ENCODE measurements at regions of chr1 and their contacts with region 1.

Region 1: DNA sequence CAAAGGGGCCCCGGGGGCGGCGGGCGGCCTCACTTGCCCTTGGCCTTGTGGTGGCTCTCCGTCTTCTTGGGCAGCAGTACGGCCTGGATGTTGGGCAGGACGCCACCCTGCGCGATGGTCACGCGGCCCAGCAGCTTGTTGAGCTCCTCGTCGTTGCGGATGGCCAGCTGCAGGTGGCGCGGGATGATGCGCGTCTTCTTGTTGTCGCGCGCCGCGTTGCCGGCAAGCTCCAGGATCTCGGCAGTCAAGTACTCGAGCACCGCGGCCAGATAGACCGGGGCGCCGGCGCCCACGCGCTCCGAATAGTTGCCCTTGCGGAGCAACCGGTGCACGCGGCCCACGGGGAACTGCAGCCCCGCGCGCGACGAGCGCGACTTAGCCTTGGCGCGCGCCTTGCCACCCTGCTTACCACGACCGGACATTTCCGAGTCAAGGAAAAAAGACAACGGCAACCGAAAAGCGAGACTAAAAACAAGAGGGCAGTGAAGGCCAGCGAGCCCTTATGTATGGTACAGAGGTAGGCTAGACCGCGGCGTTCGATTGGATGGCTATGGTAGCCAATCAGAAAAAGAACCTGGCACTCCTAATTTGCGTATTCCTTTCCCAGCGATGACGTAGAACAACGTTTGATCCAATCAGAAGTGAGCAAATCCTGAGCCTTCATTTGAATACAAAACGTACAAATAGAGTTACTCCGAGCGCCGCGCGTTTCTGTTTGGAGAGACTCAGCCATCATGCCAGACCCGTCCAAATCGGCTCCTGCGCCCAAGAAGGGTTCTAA is 29.6 kb upstream of the RNF187 start:
- DNase-seq: peak; percentile 92
- H3K4me3 Mint-ChIP-seq: peak overlapping the region; percentile 96
- H3K27ac Mint-ChIP-seq: peak overlapping the region; percentile 99
- H3K4me1 Mint-ChIP-seq: peaks cover 55% of the 10 kb centered on the region
- H3K27me3 Mint-ChIP-seq: no peaks in the 10 kb centered on the region

Region 2: DNA sequence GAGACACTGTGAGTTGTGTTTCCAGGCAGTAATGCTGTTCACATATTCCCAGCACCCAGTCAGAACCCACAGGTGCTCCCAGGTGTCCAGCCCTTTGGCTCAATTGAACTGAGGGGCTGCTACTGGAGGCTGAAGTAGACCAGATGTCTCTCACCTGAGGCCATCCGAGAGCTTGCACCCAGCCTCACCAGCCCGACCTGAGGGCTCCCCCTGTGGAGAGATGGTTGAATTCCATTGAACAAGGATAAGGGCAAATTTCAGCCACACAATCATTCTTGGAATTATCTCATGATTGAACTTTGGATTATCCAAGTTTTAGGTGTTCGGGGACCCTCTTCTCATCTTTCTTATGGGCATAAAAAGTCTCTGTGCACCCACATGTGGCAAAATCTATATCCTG is 197.6 kb before region 1 on chr1:
- CTCF ChIA-PET with region 1: no interaction called
- POLR2A ChIA-PET with region 1: no interaction called
- DNase-seq: no peak
- H3K4me3 Mint-ChIP-seq: no peak overlapping the region
- H3K27ac Mint-ChIP-seq: no peak overlapping the region
- H3K4me1 Mint-ChIP-seq: no peaks in the 10 kb centered on the region
- H3K27me3 Mint-ChIP-seq: no peaks in the 10 kb centered on the region

Region 3: GRCh38 chr1:228378090-228378872 is 79.3 kb before region 1 on chr1:
- CTCF ChIA-PET with region 1: no interaction called
- POLR2A ChIA-PET with region 1: no interaction called
- DNase-seq: peak; percentile 70
- H3K4me3 Mint-ChIP-seq: peak overlapping the region; percentile 73
- H3K27ac Mint-ChIP-seq: no peak overlapping the region
- H3K4me1 Mint-ChIP-seq: peaks cover 9% of the 10 kb centered on the region
- H3K27me3 Mint-ChIP-seq: peaks cover 35% of the 10 kb centered on the region

Region 4: DNA sequence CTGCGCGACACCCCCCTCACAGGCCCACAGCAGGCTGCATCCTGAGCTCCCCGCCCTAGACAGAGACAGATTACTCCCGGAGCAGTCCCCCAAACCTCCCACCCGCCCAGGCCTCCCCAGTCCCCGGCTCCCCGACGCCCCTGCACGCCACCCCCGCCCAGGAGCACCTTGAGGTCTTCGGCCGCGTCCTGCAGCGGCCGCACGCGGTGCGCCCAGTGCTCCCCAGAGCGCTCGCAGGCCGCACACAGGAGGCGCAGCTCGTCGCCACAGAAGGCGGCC is 51.7 kb before region 1 on chr1:
- CTCF ChIA-PET with region 1: interaction called, 8 read pairs
- POLR2A ChIA-PET with region 1: interaction called, 90 read pairs
- DNase-seq: no peak
- H3K4me3 Mint-ChIP-seq: peak overlapping the region; percentile 85
- H3K27ac Mint-ChIP-seq: peak overlapping the region; percentile 90
- H3K4me1 Mint-ChIP-seq: peaks cover 61% of the 10 kb centered on the region
- H3K27me3 Mint-ChIP-seq: no peaks in the 10 kb centered on the region

Region 5: DNA sequence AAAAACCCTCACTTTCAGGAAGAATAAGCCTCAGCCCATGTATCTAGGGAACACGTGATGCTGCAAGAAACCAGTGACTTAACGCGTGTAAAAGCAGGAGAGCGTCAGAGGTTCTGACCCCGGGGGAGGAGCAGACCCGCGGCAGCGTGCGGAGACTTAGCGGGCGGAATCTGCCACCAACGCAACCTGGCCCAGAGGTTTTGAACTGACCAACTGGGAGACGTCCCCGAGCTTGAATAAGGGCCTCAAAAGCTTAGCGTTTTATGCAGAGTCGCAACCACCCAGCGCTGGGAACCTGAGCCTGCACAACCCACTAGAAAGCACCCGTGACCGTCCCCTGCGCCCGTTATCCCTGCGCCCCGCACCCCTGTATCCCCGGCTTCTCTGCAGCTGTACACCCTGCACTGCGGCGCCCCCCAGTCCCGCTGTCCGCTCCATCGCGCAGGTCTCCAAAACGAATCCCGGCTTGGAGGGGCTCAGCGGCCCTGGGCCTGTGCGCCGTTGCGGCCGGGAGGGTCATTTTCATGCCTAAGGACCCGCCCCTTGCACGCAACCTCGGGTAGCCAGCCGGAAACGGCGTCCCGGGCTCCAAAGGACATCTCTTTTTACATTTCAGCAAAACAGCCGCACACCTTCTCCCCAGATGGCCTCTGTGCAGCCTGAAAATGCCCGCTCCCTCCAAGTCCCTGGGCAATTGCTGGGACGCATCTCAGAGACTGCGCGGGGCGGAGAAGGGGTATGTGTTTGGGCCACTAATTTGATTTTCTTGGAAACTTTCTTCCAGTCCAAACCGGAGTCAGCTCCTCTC is 11.5 kb before region 1 on chr1:
- CTCF ChIA-PET with region 1: interaction called, 8 read pairs
- POLR2A ChIA-PET with region 1: interaction called, 17 read pairs
- DNase-seq: peak; percentile 52
- H3K4me3 Mint-ChIP-seq: peak overlapping the region; percentile 74
- H3K27ac Mint-ChIP-seq: peak overlapping the region; percentile 18
- H3K4me1 Mint-ChIP-seq: peaks cover 19% of the 10 kb centered on the region
- H3K27me3 Mint-ChIP-seq: peaks cover 57% of the 10 kb centered on the region

Region 6: DNA sequence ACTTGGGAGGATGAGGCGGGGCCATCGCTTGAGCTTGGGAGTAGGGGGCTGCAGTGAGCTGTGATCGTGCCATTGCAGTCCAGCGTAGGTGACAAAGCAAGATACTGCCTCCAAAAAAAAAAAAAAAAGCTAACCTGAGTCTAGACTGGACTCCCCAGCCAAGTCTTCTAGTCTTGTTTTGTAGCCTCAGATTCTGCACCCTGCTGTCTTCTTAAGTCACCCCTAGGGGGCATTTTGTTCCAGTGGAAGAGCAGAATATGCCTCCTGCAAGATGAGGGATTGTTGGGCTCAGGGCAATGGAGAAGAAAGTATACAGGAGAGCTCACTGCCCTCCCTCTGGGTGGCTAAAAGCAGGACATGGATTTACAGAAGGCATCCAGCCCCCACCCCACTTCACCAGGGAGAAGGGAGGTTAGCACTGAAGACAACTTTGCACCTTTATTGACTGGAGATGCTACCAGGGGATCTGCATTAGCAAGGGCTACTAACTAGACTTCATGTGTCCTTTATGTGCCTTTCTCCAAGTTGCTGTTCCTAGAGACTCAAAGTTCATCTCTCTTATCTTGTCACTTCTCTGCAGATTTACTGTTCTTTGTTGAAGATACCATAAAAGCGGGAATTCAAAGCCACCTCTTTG is 14.3 kb after region 1 on chr1:
- CTCF ChIA-PET with region 1: interaction called, 30 read pairs
- POLR2A ChIA-PET with region 1: interaction called, 63 read pairs
- DNase-seq: peak; percentile 39
- H3K4me3 Mint-ChIP-seq: no peak overlapping the region
- H3K27ac Mint-ChIP-seq: no peak overlapping the region
- H3K4me1 Mint-ChIP-seq: peaks cover 40% of the 10 kb centered on the region
- H3K27me3 Mint-ChIP-seq: peaks cover 3% of the 10 kb centered on the region

Region 7: DNA sequence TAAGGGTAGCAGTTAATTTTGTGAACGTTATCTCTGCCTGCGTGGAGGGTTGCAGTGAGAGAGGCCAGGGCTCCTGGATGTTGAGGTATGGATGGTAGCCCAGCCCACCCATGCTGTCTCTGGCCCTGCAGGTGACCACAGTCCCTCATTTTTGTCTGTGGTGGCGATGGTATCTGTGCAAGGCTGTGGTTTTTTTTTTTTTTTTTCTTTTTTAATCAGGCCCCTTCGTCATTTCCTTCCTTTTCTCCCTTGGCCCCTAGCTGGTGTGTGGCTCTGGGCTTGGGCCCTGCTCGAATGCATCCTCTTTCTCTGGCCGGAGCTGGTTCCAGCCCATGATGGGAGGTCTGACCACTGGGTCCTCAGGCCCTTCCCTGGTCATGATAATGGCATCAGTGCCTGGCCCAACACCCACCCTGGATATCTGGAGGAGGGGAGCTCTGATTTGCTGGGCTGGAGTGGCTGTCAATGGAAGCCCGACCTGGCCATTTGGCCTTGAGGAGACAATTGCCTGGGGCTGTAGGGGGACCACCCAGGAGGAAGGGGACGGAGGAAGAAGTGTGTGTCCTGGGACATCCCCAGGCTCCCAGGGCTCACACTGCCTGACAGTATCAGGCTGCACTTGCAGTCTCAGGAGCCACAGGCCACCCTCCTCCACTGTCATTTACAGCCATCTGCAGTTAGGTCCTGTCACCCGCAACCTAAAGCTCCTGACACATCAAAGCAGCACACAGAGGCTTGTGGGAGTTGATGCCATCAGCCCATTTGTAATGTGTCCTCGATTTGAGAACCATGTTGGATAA is 21.5 kb after region 1 on chr1:
- CTCF ChIA-PET with region 1: interaction called, 21 read pairs
- POLR2A ChIA-PET with region 1: interaction called, 63 read pairs
- DNase-seq: peak; percentile 59
- H3K4me3 Mint-ChIP-seq: peak overlapping the region; percentile 48
- H3K27ac Mint-ChIP-seq: peak overlapping the region; percentile 91
- H3K4me1 Mint-ChIP-seq: peaks cover 62% of the 10 kb centered on the region
- H3K27me3 Mint-ChIP-seq: peaks cover 2% of the 10 kb centered on the region

Region 8: DNA sequence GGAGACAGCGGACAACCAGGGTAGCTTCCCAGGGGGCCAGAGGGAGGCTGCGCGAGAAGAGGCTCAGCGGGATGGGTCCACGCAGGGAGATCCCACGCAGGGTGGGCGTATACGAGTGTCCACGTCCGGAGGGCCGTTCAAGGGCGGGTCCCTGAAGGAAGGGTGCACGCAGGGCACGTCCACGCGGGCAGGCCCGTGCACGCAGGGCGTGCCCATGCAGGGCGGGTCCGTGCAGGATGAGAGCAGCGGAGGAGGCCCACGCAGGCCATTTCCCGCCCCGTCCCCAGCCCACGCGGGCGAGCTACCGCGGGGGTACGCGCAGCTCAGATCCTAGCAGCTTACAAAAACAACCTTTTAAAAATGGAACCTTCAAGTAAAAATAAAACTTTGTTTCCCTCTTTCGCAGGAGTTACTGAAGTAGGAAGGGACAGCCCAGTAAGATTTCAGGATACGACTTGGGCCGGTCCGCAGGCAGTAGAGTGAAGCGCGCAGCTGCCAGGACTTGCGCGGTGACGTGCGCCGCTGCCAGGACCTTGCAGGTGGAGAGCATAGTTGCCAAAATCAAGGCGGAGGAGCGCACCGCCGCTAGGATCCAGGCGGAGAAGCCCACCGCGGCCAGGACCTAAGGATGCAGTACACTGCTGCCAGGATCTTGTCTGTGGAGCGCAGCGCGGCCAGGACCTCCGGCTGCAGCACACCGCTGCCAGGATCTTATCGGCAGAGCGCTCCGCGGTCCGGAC is 29.2 kb after region 1 on chr1:
- CTCF ChIA-PET with region 1: interaction called, 17 read pairs
- POLR2A ChIA-PET with region 1: interaction called, 153 read pairs
- DNase-seq: peak; percentile 82
- H3K4me3 Mint-ChIP-seq: peak overlapping the region; percentile 94
- H3K27ac Mint-ChIP-seq: peak overlapping the region; percentile 96
- H3K4me1 Mint-ChIP-seq: peaks cover 56% of the 10 kb centered on the region
- H3K27me3 Mint-ChIP-seq: no peaks in the 10 kb centered on the region

Region 9: GRCh38 chr1:228500901-228501871 is 43.6 kb after region 1 on chr1:
- CTCF ChIA-PET with region 1: interaction called, 12 read pairs
- POLR2A ChIA-PET with region 1: interaction called, 17 read pairs
- DNase-seq: peak; percentile 90
- H3K4me3 Mint-ChIP-seq: peak overlapping the region; percentile 40
- H3K27ac Mint-ChIP-seq: peak overlapping the region; percentile 41
- H3K4me1 Mint-ChIP-seq: peaks cover 38% of the 10 kb centered on the region
- H3K27me3 Mint-ChIP-seq: no peaks in the 10 kb centered on the region

Measured in activated CD4-positive, alpha-beta memory T cell treated with anti-CD3 and anti-CD28 coated beads, Interleukin-2, amount 10 ng/mL, durations not matched to agents 7 days and 5 days (primary cell).